ENCODE measurements at regions of chr7 and their contacts with region 1.

Region 1: GRCh38 chr7:125061776-125062397 is 132.3 kb upstream of the POT1 start:
- DNase-seq: peak; percentile 83
- H3K4me3 ChIP-seq: no peak overlapping the region
- H3K27ac ChIP-seq: peak overlapping the region; percentile 89
- H3K4me1 ChIP-seq: peaks cover 13% of the 10 kb centered on the region
- H3K27me3 ChIP-seq: no peaks in the 10 kb centered on the region
- CTCF ChIP-seq: no peak
- POLR2A ChIP-seq: no peak

Region 2: DNA sequence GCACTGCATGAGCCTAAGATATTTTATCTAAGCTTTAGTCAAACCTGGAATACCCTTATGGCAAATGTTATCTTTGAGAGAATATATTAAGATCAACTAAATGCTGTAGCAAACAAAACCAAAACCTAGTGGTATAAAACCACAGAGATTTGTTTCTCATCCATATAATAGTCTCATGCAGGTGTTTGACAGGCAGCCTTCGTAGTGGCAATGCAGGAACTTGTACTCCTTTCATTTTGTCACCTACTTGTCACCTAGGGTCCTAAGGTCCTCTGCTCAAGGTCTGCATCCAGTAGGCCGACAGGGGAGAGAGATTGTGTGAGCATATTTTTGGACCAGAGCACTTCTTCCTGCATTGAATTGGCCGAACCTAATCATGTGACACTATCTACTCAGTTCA is 648.9 kb before region 1 on chr7:
- CTCF ChIA-PET with region 1: no interaction called
- POLR2A ChIA-PET with region 1: no interaction called
- dilution Hi-C with region 1: no loop called
- intact Hi-C with region 1: no loop called
- DNase-seq: no peak
- H3K4me3 ChIP-seq: no peak overlapping the region
- H3K27ac ChIP-seq: no peak overlapping the region
- H3K4me1 ChIP-seq: no peaks in the 10 kb centered on the region
- H3K27me3 ChIP-seq: no peaks in the 10 kb centered on the region
- CTCF ChIP-seq: no peak
- POLR2A ChIP-seq: no peak

Region 3: GRCh38 chr7:124836173-124836572 is 225.7 kb before region 1 on chr7:
- CTCF ChIA-PET with region 1: no interaction called
- POLR2A ChIA-PET with region 1: no interaction called
- dilution Hi-C with region 1: no loop called
- intact Hi-C with region 1: no loop called
- DNase-seq: no peak
- H3K4me3 ChIP-seq: no peak overlapping the region
- H3K27ac ChIP-seq: no peak overlapping the region
- H3K4me1 ChIP-seq: peaks cover 8% of the 10 kb centered on the region
- H3K27me3 ChIP-seq: no peaks in the 10 kb centered on the region
- CTCF ChIP-seq: no peak
- POLR2A ChIP-seq: no peak

Region 4: GRCh38 chr7:125046767-125047166 is 15.1 kb before region 1 on chr7:
- CTCF ChIA-PET with region 1: interaction called, 13 read pairs
- POLR2A ChIA-PET with region 1: no interaction called
- dilution Hi-C with region 1: no loop called
- intact Hi-C with region 1: no loop called
- DNase-seq: no peak
- H3K4me3 ChIP-seq: no peak overlapping the region
- H3K27ac ChIP-seq: no peak overlapping the region
- H3K4me1 ChIP-seq: no peaks in the 10 kb centered on the region
- H3K27me3 ChIP-seq: no peaks in the 10 kb centered on the region
- CTCF ChIP-seq: no peak
- POLR2A ChIP-seq: no peak

Region 5: GRCh38 chr7:125126376-125126775 is 64.5 kb after region 1 on chr7:
- CTCF ChIA-PET with region 1: no interaction called
- POLR2A ChIA-PET with region 1: no interaction called
- dilution Hi-C with region 1: no loop called
- intact Hi-C with region 1: no loop called
- DNase-seq: no peak
- H3K4me3 ChIP-seq: no peak overlapping the region
- H3K27ac ChIP-seq: no peak overlapping the region
- H3K4me1 ChIP-seq: peaks cover 10% of the 10 kb centered on the region
- H3K27me3 ChIP-seq: no peaks in the 10 kb centered on the region
- CTCF ChIP-seq: no peak
- POLR2A ChIP-seq: no peak

Region 6: DNA sequence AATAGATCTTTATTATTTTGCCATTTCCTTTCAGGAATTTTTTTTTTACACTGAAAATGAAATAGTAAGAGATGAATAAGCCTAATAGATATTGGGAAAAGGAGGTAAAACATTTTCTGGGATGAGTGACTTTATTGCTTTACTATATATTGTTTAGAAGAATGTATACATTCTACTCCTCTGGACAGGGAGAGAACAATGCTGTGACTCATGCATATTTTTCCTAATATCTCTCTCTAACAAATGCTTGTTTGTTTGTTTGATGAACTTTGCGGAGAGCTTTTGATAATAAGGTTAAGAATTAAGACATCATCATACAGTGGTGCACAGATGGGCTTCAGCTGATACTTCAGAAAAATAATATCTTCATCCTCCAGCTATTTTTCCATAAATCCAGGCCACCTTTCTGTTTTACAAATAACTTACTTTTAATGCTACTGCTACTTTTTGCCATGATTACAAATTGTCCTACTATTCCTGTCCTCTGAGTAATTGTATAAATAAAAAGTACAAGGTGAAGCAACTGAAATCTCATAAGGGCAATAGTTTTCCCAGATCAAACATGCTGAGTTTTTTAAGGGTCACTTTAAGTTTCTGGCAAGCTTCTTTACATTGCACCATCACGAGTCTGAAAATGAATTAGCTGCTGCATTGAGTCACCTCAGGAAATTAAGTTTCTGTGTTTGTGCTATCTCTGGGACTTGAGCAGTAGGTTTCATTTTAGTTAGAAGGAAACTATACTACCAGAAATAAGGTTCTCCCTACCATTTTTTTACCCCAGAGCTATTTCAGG is 75.1 kb after region 1 on chr7:
- CTCF ChIA-PET with region 1: interaction called, 14 read pairs
- POLR2A ChIA-PET with region 1: no interaction called
- dilution Hi-C with region 1: no loop called
- intact Hi-C with region 1: loop called (anchors 2 kb)
- DNase-seq: peak; percentile 88
- H3K4me3 ChIP-seq: peak overlapping the region in 1 of 3 experiments; percentile 42
- H3K27ac ChIP-seq: peak overlapping the region; percentile 76
- H3K4me1 ChIP-seq: peaks cover 21% of the 10 kb centered on the region
- H3K27me3 ChIP-seq: no peaks in the 10 kb centered on the region
- CTCF ChIP-seq: no peak
- POLR2A ChIP-seq: no peak

Region 7: DNA sequence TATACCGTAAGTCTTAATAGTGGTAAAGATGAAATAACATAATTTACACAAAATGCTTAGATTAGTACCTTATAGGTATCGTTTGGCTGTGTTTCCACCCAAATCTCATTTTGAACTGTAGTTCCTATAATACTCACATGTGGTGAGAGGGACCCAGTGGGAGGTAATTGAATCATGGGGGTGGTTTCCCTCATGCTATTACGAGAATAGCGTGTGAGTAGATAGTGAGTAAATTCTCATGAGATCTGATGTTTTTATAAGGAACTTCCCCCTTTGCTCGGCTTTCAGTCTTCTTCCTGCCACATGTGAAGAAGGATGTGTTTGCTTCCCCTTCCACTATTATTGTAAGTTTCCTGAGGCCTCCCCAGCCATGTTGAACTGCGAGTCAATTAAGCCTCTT is 294.0 kb after region 1 on chr7:
- CTCF ChIA-PET with region 1: interaction called, 4 read pairs
- POLR2A ChIA-PET with region 1: no interaction called
- dilution Hi-C with region 1: no loop called
- intact Hi-C with region 1: loop called (anchors 5 kb)
- DNase-seq: peak; percentile 95
- H3K4me3 ChIP-seq: no peak overlapping the region
- H3K27ac ChIP-seq: peak overlapping the region; percentile 76
- H3K4me1 ChIP-seq: peaks cover 34% of the 10 kb centered on the region
- H3K27me3 ChIP-seq: no peaks in the 10 kb centered on the region
- CTCF ChIP-seq: no peak
- POLR2A ChIP-seq: no peak

Region 8: GRCh38 chr7:125661006-125661405 is 599.1 kb after region 1 on chr7:
- CTCF ChIA-PET with region 1: interaction called, 297 read pairs
- POLR2A ChIA-PET with region 1: no interaction called
- dilution Hi-C with region 1: no loop called
- intact Hi-C with region 1: no loop called
- DNase-seq: peak; percentile 19
- H3K4me3 ChIP-seq: no peak overlapping the region
- H3K27ac ChIP-seq: no peak overlapping the region
- H3K4me1 ChIP-seq: no peaks in the 10 kb centered on the region
- H3K27me3 ChIP-seq: no peaks in the 10 kb centered on the region
- CTCF ChIP-seq: no peak
- POLR2A ChIP-seq: no peak

Region 9: DNA sequence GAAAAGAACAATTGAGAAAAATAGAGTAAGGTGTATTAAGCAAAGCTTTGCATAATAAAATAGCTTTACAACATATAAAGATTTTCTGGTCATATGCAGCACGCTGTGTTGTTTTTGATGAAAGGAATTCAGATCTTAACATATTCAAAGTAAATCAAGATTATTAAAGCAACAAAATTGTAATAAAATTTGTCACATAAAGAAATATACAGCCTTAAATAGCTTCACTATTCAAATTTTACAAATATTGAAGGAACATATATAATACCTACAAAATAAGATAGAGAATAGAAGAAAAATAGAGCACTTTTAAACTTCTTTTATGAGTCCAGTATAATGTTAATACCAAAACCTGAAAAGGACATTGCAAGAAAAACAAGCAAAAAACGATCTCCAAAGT is 616.9 kb after region 1 on chr7:
- CTCF ChIA-PET with region 1: interaction called, 297 read pairs
- POLR2A ChIA-PET with region 1: no interaction called
- dilution Hi-C with region 1: no loop called
- intact Hi-C with region 1: no loop called
- DNase-seq: no peak
- H3K4me3 ChIP-seq: no peak overlapping the region
- H3K27ac ChIP-seq: no peak overlapping the region
- H3K4me1 ChIP-seq: no peaks in the 10 kb centered on the region
- H3K27me3 ChIP-seq: no peaks in the 10 kb centered on the region
- CTCF ChIP-seq: no peak
- POLR2A ChIP-seq: no peak

Measured in endothelial cell of umbilical vein (primary cell).